ENCODE measurements at regions of chr14 and their contacts with region 1.

Region 1: GRCh38 chr14:64438181-64438841 is 27.0 kb upstream of the AKAP5 start:
- DNase-seq: no peak
- CTCF ChIP-seq: no peak

Region 2: GRCh38 chr14:64410084-64410774 is 28.1 kb before region 1 on chr14:
- CTCF ChIA-PET with region 1: interaction called, 205 read pairs
- POLR2A ChIA-PET with region 1: no interaction called
- DNase-seq: no peak
- CTCF ChIP-seq: no peak

Region 3: GRCh38 chr14:64496764-64497163 is 58.5 kb after region 1 on chr14:
- CTCF ChIA-PET with region 1: no interaction called
- POLR2A ChIA-PET with region 1: no interaction called
- DNase-seq: no peak
- CTCF ChIP-seq: no peak